ENCODE measurements at regions of chr7 and their contacts with region 1.

Region 1: DNA sequence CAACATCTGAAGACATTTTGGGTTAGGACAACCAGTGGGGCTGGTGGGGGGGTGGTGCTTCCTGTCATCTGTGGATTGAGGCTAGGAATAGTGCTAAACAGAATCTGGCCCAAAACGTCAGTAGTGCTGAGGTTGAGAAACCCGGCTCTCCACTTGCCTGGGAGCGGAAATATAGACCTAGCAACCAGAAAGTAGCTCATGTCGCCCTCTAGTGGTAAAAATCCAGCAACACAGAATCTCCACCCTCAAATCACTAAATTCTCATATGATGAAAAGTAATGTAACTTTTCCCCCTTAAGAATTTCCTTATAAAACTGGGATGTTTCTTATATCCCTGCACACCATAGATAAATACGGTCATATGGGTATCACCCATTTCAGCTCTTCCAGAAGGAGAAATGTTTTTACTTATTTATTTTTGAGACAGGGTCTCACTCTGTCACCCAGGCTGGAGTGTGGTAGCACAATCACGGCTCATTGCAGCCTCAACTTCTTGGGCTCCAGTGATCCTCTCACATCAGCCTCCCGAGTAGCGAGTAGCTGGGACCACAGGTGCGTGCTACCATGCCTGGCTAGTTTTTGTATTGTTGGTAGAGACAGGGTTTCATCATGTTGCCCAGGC is 34.4 kb downstream of the ZC3HAV1 start:
- DNase-seq: no peak
- ATAC-seq: peak; percentile 87
- H3K4me3 Mint-ChIP-seq: no peak overlapping the region
- H3K27ac Mint-ChIP-seq: peak overlapping the region; percentile 60
- H3K4me1 Mint-ChIP-seq: peaks cover 17% of the 10 kb centered on the region
- H3K27me3 Mint-ChIP-seq: no peaks in the 10 kb centered on the region
- CTCF ChIP-seq: no peak

Region 2: GRCh38 chr7:138089080-138089991 is 985.8 kb before region 1 on chr7:
- CTCF ChIA-PET with region 1: no interaction called
- POLR2A ChIA-PET with region 1: no interaction called
- intact Hi-C with region 1: no loop called
- DNase-seq: no peak
- ATAC-seq: no peak
- H3K4me3 Mint-ChIP-seq: no peak overlapping the region
- H3K27ac Mint-ChIP-seq: no peak overlapping the region
- H3K4me1 Mint-ChIP-seq: peaks cover 4% of the 10 kb centered on the region
- H3K27me3 Mint-ChIP-seq: no peaks in the 10 kb centered on the region
- CTCF ChIP-seq: no peak

Region 3: GRCh38 chr7:138161600-138162081 is 913.5 kb before region 1 on chr7:
- CTCF ChIA-PET with region 1: no interaction called
- POLR2A ChIA-PET with region 1: no interaction called
- intact Hi-C with region 1: loop called (anchors 2 kb)
- DNase-seq: no peak
- ATAC-seq: peak; percentile 99
- H3K4me3 Mint-ChIP-seq: no peak overlapping the region
- H3K27ac Mint-ChIP-seq: no peak overlapping the region
- H3K4me1 Mint-ChIP-seq: no peaks in the 10 kb centered on the region
- H3K27me3 Mint-ChIP-seq: no peaks in the 10 kb centered on the region
- CTCF ChIP-seq: no peak

Region 4: DNA sequence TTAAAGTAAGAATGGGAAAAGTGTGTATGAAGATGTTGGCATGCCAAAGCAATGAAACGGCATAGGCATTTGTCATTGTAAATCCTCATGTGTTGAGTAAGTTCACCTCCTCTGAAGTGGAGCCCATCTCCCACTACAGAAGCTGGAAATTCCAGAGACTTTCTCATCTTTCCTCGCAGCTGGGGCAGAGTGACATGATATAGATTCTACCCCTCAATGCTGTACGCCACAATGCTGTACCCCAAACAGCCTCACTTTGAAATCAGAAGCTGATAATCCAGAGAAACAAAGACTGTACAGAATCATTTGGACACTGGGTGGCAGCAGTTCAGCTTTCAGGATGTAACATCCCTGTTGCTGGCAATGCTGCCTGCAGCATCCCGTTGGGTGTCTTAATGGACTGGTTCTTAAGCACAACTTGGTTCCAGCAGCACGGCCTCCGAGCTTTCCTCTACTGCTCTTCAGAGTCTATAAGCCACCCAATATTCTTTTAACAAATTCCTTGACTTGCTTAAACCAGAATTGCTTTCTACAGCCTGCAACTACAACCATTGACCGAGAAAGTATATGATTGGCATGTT is 58.1 kb before region 1 on chr7:
- CTCF ChIA-PET with region 1: interaction called, 13 read pairs
- POLR2A ChIA-PET with region 1: no interaction called
- intact Hi-C with region 1: loop called (anchors 1 kb)
- DNase-seq: no peak
- ATAC-seq: peak; percentile 71
- H3K4me3 Mint-ChIP-seq: no peak overlapping the region
- H3K27ac Mint-ChIP-seq: no peak overlapping the region
- H3K4me1 Mint-ChIP-seq: peaks cover 2% of the 10 kb centered on the region
- H3K27me3 Mint-ChIP-seq: peaks cover 9% of the 10 kb centered on the region
- CTCF ChIP-seq: no peak

Region 5: DNA sequence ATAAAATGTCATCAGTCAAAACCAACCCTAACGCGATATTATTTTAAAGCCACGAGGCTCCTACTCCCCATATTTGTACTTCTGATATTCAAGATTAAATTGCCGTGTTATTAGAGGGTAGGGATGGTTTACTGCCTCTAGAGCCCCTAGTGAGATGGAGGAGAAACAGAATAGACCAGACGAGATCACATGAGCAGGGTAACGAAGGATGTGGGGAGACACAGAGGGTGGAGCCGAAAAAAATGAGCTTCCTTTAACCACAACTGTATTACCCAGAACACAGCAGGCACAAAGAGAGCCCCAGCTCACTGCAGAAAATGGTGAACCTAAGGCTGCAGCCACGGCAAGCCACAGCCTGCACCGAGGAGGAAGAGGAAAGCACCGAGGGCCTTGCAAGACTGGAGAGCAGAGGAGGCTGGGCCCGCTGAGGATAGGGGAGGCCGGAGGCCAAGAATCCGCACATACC is 20.1 kb after region 1 on chr7:
- CTCF ChIA-PET with region 1: interaction called, 14 read pairs
- POLR2A ChIA-PET with region 1: interaction called, 7 read pairs
- intact Hi-C with region 1: loop called (anchors 2 kb)
- DNase-seq: peak; percentile 44
- ATAC-seq: peak; percentile 96
- H3K4me3 Mint-ChIP-seq: peak overlapping the region; percentile 63
- H3K27ac Mint-ChIP-seq: peak overlapping the region; percentile 94
- H3K4me1 Mint-ChIP-seq: peaks cover 78% of the 10 kb centered on the region
- H3K27me3 Mint-ChIP-seq: no peaks in the 10 kb centered on the region
- CTCF ChIP-seq: no peak

Region 6: DNA sequence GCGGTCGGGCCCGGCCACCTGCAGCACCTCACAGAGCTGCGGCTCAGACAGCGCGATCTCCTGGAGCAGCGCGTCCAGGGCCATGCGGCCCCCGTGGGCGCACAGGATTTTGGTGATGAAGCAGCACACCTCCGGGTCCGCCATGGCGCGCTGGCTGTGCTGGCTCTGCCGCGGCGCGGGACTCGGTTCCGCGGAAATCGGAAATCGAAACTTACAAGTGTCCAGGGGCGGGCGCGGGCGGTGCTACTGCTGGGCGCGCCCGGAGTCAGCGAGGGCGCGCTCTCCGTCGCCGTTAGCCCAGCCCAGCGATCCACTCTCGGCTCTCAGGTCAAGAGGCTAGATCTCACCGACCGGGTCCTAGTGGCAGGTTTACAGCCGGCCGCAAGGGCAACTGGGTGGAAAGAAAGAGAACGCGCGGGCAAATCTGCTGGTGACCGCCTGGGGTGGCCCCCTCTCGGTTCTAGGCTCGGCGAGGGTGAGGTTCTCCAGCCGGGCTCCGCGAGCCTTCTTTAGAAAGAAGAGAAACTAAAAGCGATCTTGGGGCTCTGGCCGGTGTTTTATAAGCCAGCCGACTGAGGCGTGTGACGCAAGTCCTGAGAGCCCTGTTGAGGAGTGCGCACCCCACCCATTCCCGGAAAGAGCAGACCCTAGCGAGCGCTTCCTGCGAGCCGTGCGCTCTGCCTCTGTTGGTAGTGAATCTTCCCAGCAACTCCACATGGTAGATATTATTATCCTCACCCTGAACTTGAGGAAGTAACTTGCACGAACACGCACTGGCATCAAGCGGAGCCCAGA is 34.2 kb after region 1 on chr7 and contains the start of gene ZC3HAV1:
- CTCF ChIA-PET with region 1: interaction called, 13 read pairs
- POLR2A ChIA-PET with region 1: no interaction called
- intact Hi-C with region 1: loop called (anchors 1 kb)
- DNase-seq: peak; percentile 73
- ATAC-seq: peak; percentile 76
- H3K4me3 Mint-ChIP-seq: peak within 1 kb of the TSS; percentile 90
- H3K27ac Mint-ChIP-seq: peak within 1 kb of the TSS; percentile 97
- H3K4me1 Mint-ChIP-seq: peaks cover 44% of the 10 kb centered on the region
- H3K27me3 Mint-ChIP-seq: no peaks in the 10 kb centered on the region
- CTCF ChIP-seq: no peak
- total RNA-seq, gene ZC3HAV1: 76.3 and 80.7 TPM in 2 replicates